CD8-positive, alpha-beta T cell (primary cell): ENCODE measurements at regions of chr5 and their contacts with region 1.

Region 1: GRCh38 chr5:157219491-157220271 is 39.0 kb downstream of the ITK start:
- DNase-seq: no peak
- ATAC-seq: no peak
- H3K4me3 ChIP-seq: no peak overlapping the region
- H3K4me3 Mint-ChIP-seq: peak overlapping the region; percentile 40
- H3K27ac ChIP-seq: peak overlapping the region in 1 of 2 experiments; percentile 76
- H3K27ac Mint-ChIP-seq: peak overlapping the region; percentile 91
- H3K4me1 ChIP-seq: peaks cover 85% of the 10 kb centered on the region
- H3K4me1 Mint-ChIP-seq: peaks cover 87% of the 10 kb centered on the region
- H3K27me3 ChIP-seq: no peaks in the 10 kb centered on the region
- H3K27me3 Mint-ChIP-seq: no peaks in the 10 kb centered on the region
- CTCF ChIP-seq: no peak

Region 2: GRCh38 chr5:157180374-157181264 is 39.1 kb before region 1 on chr5 and contains the start of gene ITK:
- CTCF ChIA-PET with region 1: interaction called, 4 read pairs
- POLR2A ChIA-PET with region 1: interaction called, 87 read pairs
- intact Hi-C with region 1: loop called in 1 of 2 experiments (anchors 2 kb)
- DNase-seq: peak in 5 of 9 experiments; percentile 39 to 90 (median 73)
- ATAC-seq: peak; percentile 76
- H3K4me3 ChIP-seq: peak within 1 kb of the TSS; percentile 78 to 84
- H3K4me3 Mint-ChIP-seq: peak within 1 kb of the TSS; percentile 93
- H3K27ac ChIP-seq: peak within 1 kb of the TSS; percentile 79 to 80
- H3K27ac Mint-ChIP-seq: peak within 1 kb of the TSS; percentile 95
- H3K4me1 ChIP-seq: peaks cover 39% of the 10 kb centered on the region
- H3K4me1 Mint-ChIP-seq: peaks cover 55% of the 10 kb centered on the region
- H3K27me3 ChIP-seq: no peaks in the 10 kb centered on the region
- H3K27me3 Mint-ChIP-seq: no peaks in the 10 kb centered on the region
- CTCF ChIP-seq: no peak
- total RNA-seq, gene ITK: 222 to 231 TPM

Region 3: GRCh38 chr5:157189223-157189622 is 30.5 kb before region 1 on chr5:
- CTCF ChIA-PET with region 1: interaction called, 9 read pairs
- POLR2A ChIA-PET with region 1: interaction called, 87 read pairs
- intact Hi-C with region 1: loop called in 1 of 2 experiments (anchors 2 kb)
- DNase-seq: no peak
- ATAC-seq: no peak
- H3K4me3 ChIP-seq: peak overlapping the region; percentile 18 to 40
- H3K4me3 Mint-ChIP-seq: peak overlapping the region; percentile 85
- H3K27ac ChIP-seq: peak overlapping the region; percentile 34 to 83
- H3K27ac Mint-ChIP-seq: peak overlapping the region; percentile 93
- H3K4me1 ChIP-seq: peaks cover 86% of the 10 kb centered on the region
- H3K4me1 Mint-ChIP-seq: peaks cover 86% of the 10 kb centered on the region
- H3K27me3 ChIP-seq: no peaks in the 10 kb centered on the region
- H3K27me3 Mint-ChIP-seq: no peaks in the 10 kb centered on the region
- CTCF ChIP-seq: no peak

Region 4: DNA sequence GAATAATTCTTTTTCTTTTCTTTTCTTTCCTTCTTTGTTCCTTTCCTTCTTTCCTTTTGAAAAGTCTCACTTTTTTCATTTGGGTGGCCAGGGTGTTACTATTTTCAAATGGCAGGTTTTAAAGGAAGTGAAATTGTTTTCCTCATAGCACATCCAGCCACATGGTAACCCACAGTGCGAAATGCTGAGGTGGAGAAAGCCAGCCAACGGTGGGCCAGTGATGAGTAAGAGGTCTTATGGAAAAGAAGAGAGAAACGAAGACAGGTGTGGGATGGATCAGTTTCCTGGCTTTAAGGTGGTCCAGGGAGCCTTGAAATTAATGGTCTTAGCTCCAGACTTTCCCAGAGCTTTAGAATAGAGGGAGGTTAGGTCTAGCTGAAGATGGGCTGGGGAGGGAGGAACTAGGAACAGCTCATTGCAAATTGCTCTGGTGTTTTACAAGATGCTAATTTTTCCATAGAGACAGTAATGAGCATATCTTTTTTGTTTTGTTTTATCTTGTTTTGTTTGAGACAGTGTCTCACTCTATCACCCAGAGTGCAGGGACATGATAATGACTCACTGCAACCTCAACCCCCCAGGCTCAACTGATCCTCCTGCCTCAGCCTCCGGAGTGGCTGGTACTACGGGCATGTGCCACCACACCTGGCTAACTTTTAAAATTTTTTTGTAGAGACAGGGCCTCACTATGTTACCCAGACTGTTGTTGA is 21.2 kb before region 1 on chr5:
- CTCF ChIA-PET with region 1: interaction called, 5 read pairs
- POLR2A ChIA-PET with region 1: interaction called, 63 read pairs
- intact Hi-C with region 1: loop called in 1 of 2 experiments (anchors 2 kb)
- DNase-seq: peak in 6 of 9 experiments; percentile 42 to 84 (median 66)
- ATAC-seq: peak; percentile 60
- H3K4me3 ChIP-seq: no peak overlapping the region
- H3K4me3 Mint-ChIP-seq: peak overlapping the region; percentile 63
- H3K27ac ChIP-seq: peak overlapping the region; percentile 32 to 83
- H3K27ac Mint-ChIP-seq: peak overlapping the region; percentile 94
- H3K4me1 ChIP-seq: peaks cover 97% of the 10 kb centered on the region
- H3K4me1 Mint-ChIP-seq: peaks cover 93% of the 10 kb centered on the region
- H3K27me3 ChIP-seq: no peaks in the 10 kb centered on the region
- H3K27me3 Mint-ChIP-seq: no peaks in the 10 kb centered on the region
- CTCF ChIP-seq: no peak

Region 5: DNA sequence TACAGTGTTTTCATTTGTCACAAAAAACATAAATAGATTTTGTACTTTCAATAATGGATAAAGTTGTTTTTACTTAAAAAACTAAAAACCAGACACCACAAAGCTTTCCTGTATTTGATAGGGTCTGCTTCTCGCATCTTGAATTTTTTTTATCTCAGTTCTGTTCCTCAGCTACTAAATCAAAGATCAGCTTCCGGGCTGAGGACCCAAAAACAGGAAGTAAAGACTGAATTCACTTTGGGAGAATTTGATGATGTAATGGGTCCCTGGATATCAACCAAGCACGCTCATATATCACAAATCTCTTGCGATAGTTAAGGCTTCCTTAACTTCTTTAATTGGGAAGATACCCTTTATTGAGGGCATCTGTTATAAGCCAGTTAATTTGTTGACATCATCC is 14.9 kb before region 1 on chr5:
- CTCF ChIA-PET with region 1: interaction called, 5 read pairs
- POLR2A ChIA-PET with region 1: interaction called, 63 read pairs
- intact Hi-C with region 1: loop called in 1 of 2 experiments (anchors 2 kb)
- DNase-seq: peak in 3 of 9 experiments; percentile 41 to 81 (median 60)
- ATAC-seq: peak; percentile 53
- H3K4me3 ChIP-seq: peak overlapping the region in 1 of 2 experiments; percentile 35
- H3K4me3 Mint-ChIP-seq: peak overlapping the region; percentile 54
- H3K27ac ChIP-seq: peak overlapping the region; percentile 34 to 74
- H3K27ac Mint-ChIP-seq: peak overlapping the region; percentile 92
- H3K4me1 ChIP-seq: peaks cover 96% of the 10 kb centered on the region
- H3K4me1 Mint-ChIP-seq: peaks cover 85% of the 10 kb centered on the region
- H3K27me3 ChIP-seq: no peaks in the 10 kb centered on the region
- H3K27me3 Mint-ChIP-seq: no peaks in the 10 kb centered on the region
- CTCF ChIP-seq: no peak

Region 6: DNA sequence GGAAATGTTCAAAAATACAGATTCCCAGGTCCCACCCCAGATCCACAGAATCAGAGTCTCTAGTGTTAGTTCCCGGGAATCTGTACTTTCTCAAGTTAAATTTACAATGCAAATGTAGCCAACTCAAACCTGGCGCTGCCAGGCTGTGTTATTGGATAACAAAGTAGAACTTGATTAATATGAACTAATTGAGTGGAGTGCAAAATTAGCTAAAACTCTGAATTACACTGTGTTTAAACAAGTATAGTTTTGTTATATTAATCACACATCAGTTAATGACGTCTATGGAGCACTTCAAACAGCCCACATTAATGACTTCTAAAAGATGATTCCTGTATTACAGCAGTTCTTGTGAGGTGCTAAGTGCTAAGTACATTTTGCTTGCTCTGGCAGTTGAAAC is 13.8 kb after region 1 on chr5:
- CTCF ChIA-PET with region 1: interaction called, 6 read pairs
- POLR2A ChIA-PET with region 1: interaction called, 11 read pairs
- intact Hi-C with region 1: loop called in 1 of 2 experiments (anchors 2 kb)
- DNase-seq: peak in 3 of 9 experiments; percentile 33 to 85 (median 69)
- ATAC-seq: peak; percentile 88
- H3K4me3 ChIP-seq: no peak overlapping the region
- H3K4me3 Mint-ChIP-seq: no peak overlapping the region
- H3K27ac ChIP-seq: peak overlapping the region; percentile 23 to 52
- H3K27ac Mint-ChIP-seq: peak overlapping the region; percentile 86
- H3K4me1 ChIP-seq: peaks cover 48% of the 10 kb centered on the region
- H3K4me1 Mint-ChIP-seq: peaks cover 62% of the 10 kb centered on the region
- H3K27me3 ChIP-seq: no peaks in the 10 kb centered on the region
- H3K27me3 Mint-ChIP-seq: no peaks in the 10 kb centered on the region
- CTCF ChIP-seq: no peak

Region 7: DNA sequence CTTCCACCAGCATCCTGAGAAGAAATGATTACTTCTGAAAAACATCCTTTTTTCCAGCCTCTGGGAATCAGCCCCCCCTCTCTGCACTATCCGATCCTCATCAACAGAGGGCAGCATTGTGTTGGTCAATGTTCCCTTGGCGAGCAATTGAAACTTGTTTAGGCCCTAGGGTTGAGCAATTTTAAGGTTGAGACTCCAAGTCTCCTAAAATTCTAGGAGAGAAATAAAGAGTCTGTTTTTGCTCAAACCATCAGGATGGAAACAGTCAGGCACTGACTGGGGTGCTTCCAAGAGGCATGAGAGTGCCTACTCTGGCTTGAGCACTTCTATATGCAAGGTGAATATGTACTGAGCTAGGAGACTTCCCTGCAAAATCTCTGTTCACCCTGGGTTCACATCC is 33.9 kb after region 1 on chr5:
- CTCF ChIA-PET with region 1: interaction called, 13 read pairs
- POLR2A ChIA-PET with region 1: interaction called, 6 read pairs
- intact Hi-C with region 1: loop called in 1 of 2 experiments (anchors 5 kb)
- DNase-seq: peak in 1 of 9 experiments; percentile 29
- ATAC-seq: no peak
- H3K4me3 ChIP-seq: no peak overlapping the region
- H3K4me3 Mint-ChIP-seq: peak overlapping the region; percentile 61
- H3K27ac ChIP-seq: peak overlapping the region; percentile 61 to 72
- H3K27ac Mint-ChIP-seq: peak overlapping the region; percentile 92
- H3K4me1 ChIP-seq: peaks cover 97% of the 10 kb centered on the region
- H3K4me1 Mint-ChIP-seq: peaks cover 93% of the 10 kb centered on the region
- H3K27me3 ChIP-seq: no peaks in the 10 kb centered on the region
- H3K27me3 Mint-ChIP-seq: no peaks in the 10 kb centered on the region
- CTCF ChIP-seq: peak; percentile 54

Region 8: DNA sequence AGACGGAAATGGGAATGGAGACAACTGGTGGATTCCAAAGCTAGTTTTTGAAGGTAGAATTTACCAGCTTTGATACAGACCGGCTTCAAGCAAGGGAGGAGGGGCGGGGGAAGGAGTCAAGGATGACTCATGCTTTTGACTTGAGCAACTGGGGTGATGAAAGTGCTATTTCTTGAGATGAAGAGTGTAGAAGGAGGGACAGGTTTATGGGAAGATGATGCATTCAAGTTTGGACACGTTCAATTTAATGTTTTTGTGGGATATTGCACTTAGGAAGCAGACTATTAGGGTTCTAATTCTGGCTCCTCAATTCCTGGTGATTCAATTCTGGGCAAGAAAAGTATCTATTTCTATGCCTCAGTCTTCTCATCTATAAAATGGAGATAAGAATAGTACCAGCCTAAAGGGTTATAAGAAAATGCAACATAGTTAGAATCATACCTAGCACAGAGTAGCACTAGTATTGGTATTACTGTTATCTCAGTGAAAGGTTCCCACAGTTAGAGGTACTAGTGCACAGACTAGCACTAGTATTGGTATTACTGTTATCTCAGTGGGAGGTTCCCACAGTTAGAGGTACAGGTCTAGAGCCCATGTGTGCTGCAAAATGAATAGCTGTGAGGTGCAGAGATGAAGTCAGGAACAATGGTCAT is 245.0 kb after region 1 on chr5:
- CTCF ChIA-PET with region 1: no interaction called
- POLR2A ChIA-PET with region 1: no interaction called
- intact Hi-C with region 1: no loop called
- DNase-seq: peak in 4 of 9 experiments; percentile 25 to 34 (median 32)
- ATAC-seq: peak; percentile 62
- H3K4me3 ChIP-seq: no peak overlapping the region
- H3K4me3 Mint-ChIP-seq: no peak overlapping the region
- H3K27ac ChIP-seq: no peak overlapping the region
- H3K27ac Mint-ChIP-seq: no peak overlapping the region
- H3K4me1 ChIP-seq: no peaks in the 10 kb centered on the region
- H3K4me1 Mint-ChIP-seq: peaks cover 10% of the 10 kb centered on the region
- H3K27me3 ChIP-seq: peaks cover 0 to 3% of the 10 kb centered on the region in 2 experiments
- H3K27me3 Mint-ChIP-seq: peaks cover 24% of the 10 kb centered on the region
- CTCF ChIP-seq: no peak